Activated naive CD4-positive, alpha-beta T cell treated with anti-CD3 and anti-CD28 coated beads for 36 hours (primary cell): ENCODE measurements at regions of chr2 and their contacts with region 1.

Region 1: GRCh38 chr2:97697252-97698235 is 15.8 kb upstream of the ZAP70 start:
- DNase-seq: peak; percentile 97
- H3K4me3 Mint-ChIP-seq: peak overlapping the region; percentile 12
- H3K27ac Mint-ChIP-seq: no peak overlapping the region
- H3K4me1 Mint-ChIP-seq: peaks cover 4% of the 10 kb centered on the region
- H3K27me3 Mint-ChIP-seq: no peaks in the 10 kb centered on the region

Region 2: DNA sequence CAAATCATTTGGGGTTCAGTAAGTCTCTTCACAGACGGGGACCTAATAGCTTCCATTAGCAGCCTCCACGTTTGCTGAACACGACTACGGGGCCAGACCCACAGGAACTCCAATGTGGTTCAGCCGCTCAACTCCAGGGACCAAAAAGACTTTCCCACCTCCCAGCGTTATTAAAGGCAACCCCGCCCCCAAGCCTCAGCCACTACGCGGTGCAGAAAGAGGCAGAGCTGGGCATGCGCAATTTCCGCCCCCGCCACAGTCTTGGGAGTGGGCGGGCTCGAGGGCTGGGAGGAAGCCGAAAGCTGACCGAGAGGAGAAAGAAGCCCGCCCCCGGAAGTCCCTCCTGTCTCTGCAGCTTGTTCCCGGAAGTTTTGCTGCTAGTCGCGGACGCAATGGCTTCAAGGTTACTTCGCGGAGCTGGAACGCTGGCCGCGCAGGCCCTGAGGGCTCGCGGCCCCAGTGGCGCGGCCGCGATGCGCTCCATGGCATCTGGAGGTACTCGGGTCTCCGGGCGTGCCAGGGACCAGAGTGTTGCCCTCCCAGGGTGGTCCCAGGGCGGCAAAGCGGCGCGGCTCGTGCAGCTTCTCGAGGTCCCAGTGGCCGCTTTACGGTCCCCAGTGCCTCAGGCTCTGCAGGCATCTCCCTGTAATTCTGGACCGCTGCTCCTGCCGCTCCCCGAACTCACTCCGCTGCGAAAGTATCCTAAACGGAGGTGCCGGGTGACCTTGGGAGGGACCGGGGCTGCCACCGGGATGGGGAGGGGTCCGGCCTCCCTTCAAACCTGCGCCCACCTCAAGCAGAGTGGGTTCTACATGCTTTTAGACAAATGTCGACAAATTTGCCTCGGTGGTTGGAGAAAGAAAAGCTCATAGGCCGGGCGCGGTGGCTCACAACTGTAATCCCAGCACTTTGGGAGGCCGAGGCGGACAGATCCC is 51.6 kb before region 1 on chr2 and contains the start of gene COX5B:
- CTCF ChIA-PET with region 1: interaction called, 11 read pairs
- intact Hi-C with region 1: loop called (anchors 5 kb)
- DNase-seq: peak; percentile 99
- H3K4me3 Mint-ChIP-seq: peak within 1 kb of the TSS; percentile 94
- H3K27ac Mint-ChIP-seq: peak within 1 kb of the TSS; percentile 96
- H3K4me1 Mint-ChIP-seq: peaks cover 21% of the 10 kb centered on the region
- H3K27me3 Mint-ChIP-seq: no peaks in the 10 kb centered on the region
- total RNA-seq, gene COX5B: 245 to 267 TPM

Region 3: GRCh38 chr2:97710596-97711386 is 13.2 kb after region 1 on chr2:
- CTCF ChIA-PET with region 1: interaction called, 60 read pairs
- intact Hi-C with region 1: no loop called
- DNase-seq: no peak
- H3K4me3 Mint-ChIP-seq: peak overlapping the region; percentile 24
- H3K27ac Mint-ChIP-seq: no peak overlapping the region
- H3K4me1 Mint-ChIP-seq: peaks cover 43% of the 10 kb centered on the region
- H3K27me3 Mint-ChIP-seq: no peaks in the 10 kb centered on the region

Region 4: GRCh38 chr2:97740590-97741182 is 43.1 kb after region 1 on chr2:
- CTCF ChIA-PET with region 1: interaction called, 14 read pairs
- intact Hi-C with region 1: no loop called
- DNase-seq: peak; percentile 50
- H3K4me3 Mint-ChIP-seq: no peak overlapping the region
- H3K27ac Mint-ChIP-seq: peak overlapping the region; percentile 72
- H3K4me1 Mint-ChIP-seq: peaks cover 37% of the 10 kb centered on the region
- H3K27me3 Mint-ChIP-seq: no peaks in the 10 kb centered on the region

Region 5: GRCh38 chr2:98385050-98385699 is 687.6 kb after region 1 on chr2:
- CTCF ChIA-PET with region 1: interaction called, 11 read pairs
- intact Hi-C with region 1: loop called (anchors 1 kb)
- DNase-seq: peak; percentile 86
- H3K4me3 Mint-ChIP-seq: no peak overlapping the region
- H3K27ac Mint-ChIP-seq: no peak overlapping the region
- H3K4me1 Mint-ChIP-seq: no peaks in the 10 kb centered on the region
- H3K27me3 Mint-ChIP-seq: peaks cover 4% of the 10 kb centered on the region

Region 6: DNA sequence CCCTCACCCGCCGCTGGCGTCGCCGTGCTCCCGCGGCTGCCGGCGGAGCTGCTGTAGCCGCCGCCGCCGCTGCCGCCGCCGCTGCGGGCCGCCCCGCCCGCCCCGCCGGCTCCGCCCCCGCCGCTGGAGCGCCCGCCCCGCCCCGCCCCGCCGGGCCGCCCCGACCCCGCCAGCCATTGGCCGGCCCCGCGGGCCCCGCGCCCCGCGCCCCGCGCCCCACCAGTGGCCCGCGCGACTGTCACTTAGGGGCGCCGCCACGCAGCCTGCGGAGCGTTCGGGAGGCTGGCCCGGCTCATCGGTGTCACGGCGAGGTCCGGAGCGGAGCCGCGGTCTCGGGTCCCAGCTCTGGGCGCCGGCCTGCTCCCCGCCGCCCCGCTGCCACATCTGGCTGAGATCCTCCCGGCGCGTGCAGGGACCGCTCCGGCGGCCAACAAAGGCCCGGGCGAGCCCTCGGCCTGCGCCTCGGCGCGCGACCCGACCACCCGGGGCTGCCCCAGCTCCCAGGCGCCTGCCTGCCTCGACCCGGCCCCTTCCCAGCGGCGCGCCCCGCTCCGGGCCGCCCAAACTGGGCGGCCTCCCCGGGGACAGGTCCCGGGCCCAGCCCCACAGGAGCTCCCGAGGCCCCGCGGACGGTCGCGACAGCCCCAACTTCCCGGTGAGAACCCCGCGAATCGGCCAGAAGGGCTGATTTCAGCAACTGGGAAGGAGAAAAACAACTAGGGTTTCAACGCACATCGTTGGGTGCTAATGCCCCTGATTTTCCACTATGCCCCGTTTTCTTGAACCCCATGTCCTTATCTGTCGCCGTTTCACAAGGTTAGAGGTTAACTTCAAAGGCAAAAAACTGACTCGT is 1033.7 kb after region 1 on chr2 and contains the start of gene MGAT4A:
- CTCF ChIA-PET with region 1: no interaction called
- intact Hi-C with region 1: no loop called
- DNase-seq: peak; percentile 81
- H3K4me3 Mint-ChIP-seq: peak within 1 kb of the TSS; percentile 89
- H3K27ac Mint-ChIP-seq: peak within 1 kb of the TSS; percentile 95
- H3K4me1 Mint-ChIP-seq: peaks cover 60% of the 10 kb centered on the region
- H3K27me3 Mint-ChIP-seq: no peaks in the 10 kb centered on the region
- total RNA-seq, gene MGAT4A: 85.5 to 87.5 TPM